Activated T-helper 2 cell treated with anti-CD3 and anti-CD28 coated beads, Interferon-gamma antibody, Interleukin-2, Interleukin-4, amounts not matched to agents 10 μg/mL and 5 μg/mL and 100 μg/mL, durations not matched to agents 14 hours and 24 hours and 36 hours (primary cell): ENCODE measurements at regions of chr2 and their contacts with region 1.

Region 1: DNA sequence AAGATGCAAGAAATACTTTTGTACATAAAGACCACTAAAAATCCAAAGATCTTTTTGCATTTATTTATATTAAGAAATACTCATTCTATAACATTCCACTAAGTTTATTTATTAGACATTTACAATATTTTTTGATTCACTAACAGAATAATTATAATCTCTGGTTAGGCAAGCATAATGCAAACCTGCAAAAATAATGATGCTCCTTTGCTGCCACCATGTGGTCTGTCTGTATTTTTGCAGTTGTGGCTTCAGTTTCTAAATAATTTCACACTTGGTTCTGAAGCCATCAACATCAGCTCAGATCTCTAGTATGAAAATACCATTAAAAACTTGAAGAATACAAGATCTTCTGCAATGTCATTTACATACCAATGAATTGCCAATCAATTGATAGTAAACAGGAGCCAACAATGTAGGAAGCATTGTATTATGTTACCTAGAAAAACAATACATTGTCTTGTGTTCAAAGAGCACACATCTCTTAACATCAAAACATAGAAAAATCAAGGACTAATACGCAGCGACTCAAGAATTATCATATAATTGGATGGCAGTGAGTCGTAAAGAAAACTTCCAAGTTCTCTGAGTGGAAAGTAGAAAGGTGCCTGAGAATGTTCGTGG is 28.8 kb upstream of the WDR75 start:
- DNase-seq: peak; percentile 12
- H3K4me3 Mint-ChIP-seq: no peak overlapping the region
- H3K27ac Mint-ChIP-seq: no peak overlapping the region
- H3K4me1 Mint-ChIP-seq: peaks cover 8% of the 10 kb centered on the region
- H3K27me3 Mint-ChIP-seq: no peaks in the 10 kb centered on the region

Region 2: GRCh38 chr2:188902901-188903491 is 509.4 kb before region 1 on chr2:
- intact Hi-C with region 1: no loop called
- DNase-seq: no peak
- H3K4me3 Mint-ChIP-seq: no peak overlapping the region
- H3K27ac Mint-ChIP-seq: no peak overlapping the region
- H3K4me1 Mint-ChIP-seq: no peaks in the 10 kb centered on the region
- H3K27me3 Mint-ChIP-seq: no peaks in the 10 kb centered on the region

Region 3: GRCh38 chr2:189096769-189097447 is 315.5 kb before region 1 on chr2:
- intact Hi-C with region 1: loop called (anchors 1 kb)
- DNase-seq: no peak
- H3K4me3 Mint-ChIP-seq: no peak overlapping the region
- H3K27ac Mint-ChIP-seq: no peak overlapping the region
- H3K4me1 Mint-ChIP-seq: no peaks in the 10 kb centered on the region
- H3K27me3 Mint-ChIP-seq: no peaks in the 10 kb centered on the region

Region 4: GRCh38 chr2:189142893-189143759 is 269.3 kb before region 1 on chr2:
- intact Hi-C with region 1: loop called (anchors 1 kb)
- DNase-seq: peak; percentile 17
- H3K4me3 Mint-ChIP-seq: no peak overlapping the region
- H3K27ac Mint-ChIP-seq: no peak overlapping the region
- H3K4me1 Mint-ChIP-seq: no peaks in the 10 kb centered on the region
- H3K27me3 Mint-ChIP-seq: no peaks in the 10 kb centered on the region

Region 5: DNA sequence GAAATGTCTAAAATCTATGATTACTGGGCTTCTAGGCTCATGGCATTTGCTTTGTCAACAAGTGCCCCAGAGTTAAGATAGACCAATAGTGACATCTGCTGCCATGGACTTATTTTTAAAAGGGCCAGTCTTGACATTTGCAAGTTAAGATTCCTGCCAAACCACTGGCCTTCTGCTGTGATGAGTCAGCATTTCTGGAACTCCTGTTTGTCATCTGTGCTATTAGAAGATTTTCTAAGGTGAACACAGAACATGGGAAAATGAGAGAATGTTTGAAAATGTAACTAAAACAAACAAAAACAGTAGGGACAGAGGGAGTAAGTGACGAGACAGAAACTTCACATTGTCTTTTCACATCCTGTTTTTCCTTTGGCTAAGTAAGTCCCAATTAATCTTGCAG is 64.9 kb before region 1 on chr2:
- intact Hi-C with region 1: no loop called
- DNase-seq: no peak
- H3K4me3 Mint-ChIP-seq: no peak overlapping the region
- H3K27ac Mint-ChIP-seq: no peak overlapping the region
- H3K4me1 Mint-ChIP-seq: peaks cover 7% of the 10 kb centered on the region
- H3K27me3 Mint-ChIP-seq: no peaks in the 10 kb centered on the region